Activated CD4-positive, alpha-beta memory T cell treated with anti-CD3 and anti-CD28 coated beads, Interleukin-2, amount 10 ng/mL, durations not matched to agents 7 days and 5 days (primary cell): ENCODE measurements at regions of chr13 and their contacts with region 1.

Region 1: GRCh38 chr13:33817901-33818706 is at the start of gene RFC3:
- DNase-seq: peak; percentile 95
- H3K4me3 Mint-ChIP-seq: peak within 1 kb of the TSS; percentile 98
- H3K27ac Mint-ChIP-seq: peak within 1 kb of the TSS; percentile 84
- H3K4me1 Mint-ChIP-seq: peaks cover 51% of the 10 kb centered on the region
- H3K27me3 Mint-ChIP-seq: peaks cover 3% of the 10 kb centered on the region
- total RNA-seq, gene RFC3: 34.9 to 35.2 TPM

Region 2: GRCh38 chr13:33775339-33776108 is 42.6 kb before region 1 on chr13:
- CTCF ChIA-PET with region 1: no interaction called
- POLR2A ChIA-PET with region 1: no interaction called
- DNase-seq: no peak
- H3K4me3 Mint-ChIP-seq: no peak overlapping the region
- H3K27ac Mint-ChIP-seq: no peak overlapping the region
- H3K4me1 Mint-ChIP-seq: no peaks in the 10 kb centered on the region
- H3K27me3 Mint-ChIP-seq: peaks cover 9% of the 10 kb centered on the region

Region 3: DNA sequence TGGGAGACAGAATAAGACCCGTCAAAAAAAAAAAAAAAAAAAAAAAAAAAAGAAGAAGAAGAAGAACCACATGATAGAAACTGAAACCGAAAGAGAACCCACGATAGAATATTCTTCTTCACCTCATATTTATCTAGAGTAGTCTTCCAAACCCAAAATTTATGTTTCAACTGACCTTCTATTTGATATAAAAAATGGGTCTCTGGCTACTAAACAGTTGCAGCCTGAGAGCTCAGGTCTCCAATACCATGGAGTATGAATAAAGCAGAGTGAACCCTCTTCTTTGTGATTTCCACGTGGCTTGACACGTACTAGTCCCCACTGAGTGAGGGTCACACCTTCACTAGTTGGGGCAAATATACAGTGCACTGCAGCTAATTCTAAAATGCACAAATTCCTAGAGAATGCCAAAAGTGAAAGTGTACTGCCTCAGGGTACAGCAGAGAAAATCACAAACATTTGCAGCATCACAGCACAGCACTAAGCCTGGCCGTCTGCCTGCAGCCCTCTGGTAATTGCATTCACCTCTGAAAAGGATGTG is 31.0 kb before region 1 on chr13:
- CTCF ChIA-PET with region 1: no interaction called
- POLR2A ChIA-PET with region 1: interaction called, 12 read pairs
- DNase-seq: peak; percentile 17
- H3K4me3 Mint-ChIP-seq: peak overlapping the region; percentile 69
- H3K27ac Mint-ChIP-seq: peak overlapping the region; percentile 54
- H3K4me1 Mint-ChIP-seq: peaks cover 13% of the 10 kb centered on the region
- H3K27me3 Mint-ChIP-seq: peaks cover 2% of the 10 kb centered on the region